Activated CD4-positive, alpha-beta memory T cell treated with anti-CD3 and anti-CD28 coated beads for 36 hours (primary cell): ENCODE measurements at regions of chr6 and their contacts with region 1.

Region 1: DNA sequence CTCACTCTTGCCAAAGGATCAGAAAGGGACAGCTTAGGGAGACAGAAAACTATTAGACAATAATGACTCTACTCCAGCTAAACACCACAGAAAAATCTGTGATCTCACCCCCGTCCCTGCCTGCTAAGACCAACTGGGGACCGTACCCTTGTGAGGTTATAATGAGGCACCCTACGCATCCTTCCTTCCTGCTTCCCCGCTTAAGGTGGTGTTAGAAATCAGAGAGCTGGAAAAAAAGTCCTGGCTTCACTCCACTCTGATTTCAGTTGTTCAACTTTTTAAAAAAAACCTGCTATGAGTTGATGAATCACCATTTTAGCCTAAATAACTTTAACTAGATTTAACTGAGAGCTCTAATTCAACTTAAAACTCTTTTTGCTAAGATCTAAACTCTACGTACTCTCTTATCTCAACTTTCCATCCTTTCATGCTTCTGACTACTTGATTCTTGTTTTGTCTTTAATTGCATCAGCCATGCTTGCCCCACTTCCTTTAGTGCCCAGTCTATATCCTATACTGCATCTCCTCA is 35.8 kb upstream of the TMEM14A start:
- DNase-seq: peak; percentile 62
- H3K4me3 Mint-ChIP-seq: peak overlapping the region; percentile 2
- H3K27ac Mint-ChIP-seq: peak overlapping the region; percentile 75
- H3K4me1 Mint-ChIP-seq: peaks cover 18% of the 10 kb centered on the region
- H3K27me3 Mint-ChIP-seq: peaks cover 5% of the 10 kb centered on the region

Region 2: DNA sequence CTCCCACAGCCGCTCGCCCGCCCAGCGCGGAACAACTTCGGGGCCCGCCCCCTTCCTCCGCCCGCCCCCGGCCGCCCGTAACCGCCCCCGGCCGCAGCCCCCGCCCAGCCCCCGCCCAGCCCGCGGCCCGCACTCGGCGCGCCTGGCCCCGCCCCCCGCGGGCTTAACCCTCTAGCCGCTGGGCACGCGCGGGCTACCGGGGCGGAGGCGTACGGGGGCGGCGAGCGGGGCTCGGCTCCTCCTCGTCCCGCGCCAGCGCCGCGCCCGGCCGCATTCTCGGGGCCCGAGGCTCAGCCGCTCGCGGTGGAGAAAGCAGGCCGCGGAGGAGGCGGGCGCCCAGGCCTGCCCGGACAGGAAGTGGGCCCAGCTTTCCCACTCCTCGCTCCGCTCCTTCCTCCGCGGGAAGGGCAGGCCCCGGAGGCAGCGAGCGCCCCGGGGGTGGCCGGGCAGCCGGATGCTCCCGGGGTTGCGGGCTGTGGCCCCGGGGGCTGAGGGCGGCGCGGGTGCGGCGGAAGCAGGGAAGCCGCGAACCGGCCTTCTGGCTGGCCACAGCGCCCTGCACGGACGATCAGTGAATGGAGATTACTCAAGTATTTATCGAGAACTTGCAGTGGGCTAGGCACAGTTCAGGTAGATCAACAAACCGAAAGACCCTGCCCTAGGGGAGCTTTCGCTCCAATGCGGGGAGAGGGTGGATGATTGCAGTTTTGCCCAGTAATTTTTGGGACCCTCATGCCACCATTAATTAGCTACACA is 57.9 kb before region 1 on chr6 and contains the start of gene TRAM2:
- CTCF ChIA-PET with region 1: no interaction called
- POLR2A ChIA-PET with region 1: interaction called, 3 read pairs
- intact Hi-C with region 1: loop called (anchors 2 kb)
- DNase-seq: peak; percentile 70
- H3K4me3 Mint-ChIP-seq: peak within 1 kb of the TSS; percentile 77
- H3K27ac Mint-ChIP-seq: peak within 1 kb of the TSS; percentile 59
- H3K4me1 Mint-ChIP-seq: peaks cover 29% of the 10 kb centered on the region
- H3K27me3 Mint-ChIP-seq: no peaks in the 10 kb centered on the region
- total RNA-seq, gene TRAM2: 2.4 to 2.6 TPM

Region 3: GRCh38 chr6:52647199-52647598 is 12.1 kb after region 1 on chr6:
- CTCF ChIA-PET with region 1: interaction called, 25 read pairs
- POLR2A ChIA-PET with region 1: interaction called, 3 read pairs
- intact Hi-C with region 1: loop called (anchors 1 kb)
- DNase-seq: peak; percentile 21
- H3K4me3 Mint-ChIP-seq: no peak overlapping the region
- H3K27ac Mint-ChIP-seq: no peak overlapping the region
- H3K4me1 Mint-ChIP-seq: peaks cover 8% of the 10 kb centered on the region
- H3K27me3 Mint-ChIP-seq: peaks cover 13% of the 10 kb centered on the region